ENCODE measurements at regions of chr6 and their contacts with region 1.

Region 1: DNA sequence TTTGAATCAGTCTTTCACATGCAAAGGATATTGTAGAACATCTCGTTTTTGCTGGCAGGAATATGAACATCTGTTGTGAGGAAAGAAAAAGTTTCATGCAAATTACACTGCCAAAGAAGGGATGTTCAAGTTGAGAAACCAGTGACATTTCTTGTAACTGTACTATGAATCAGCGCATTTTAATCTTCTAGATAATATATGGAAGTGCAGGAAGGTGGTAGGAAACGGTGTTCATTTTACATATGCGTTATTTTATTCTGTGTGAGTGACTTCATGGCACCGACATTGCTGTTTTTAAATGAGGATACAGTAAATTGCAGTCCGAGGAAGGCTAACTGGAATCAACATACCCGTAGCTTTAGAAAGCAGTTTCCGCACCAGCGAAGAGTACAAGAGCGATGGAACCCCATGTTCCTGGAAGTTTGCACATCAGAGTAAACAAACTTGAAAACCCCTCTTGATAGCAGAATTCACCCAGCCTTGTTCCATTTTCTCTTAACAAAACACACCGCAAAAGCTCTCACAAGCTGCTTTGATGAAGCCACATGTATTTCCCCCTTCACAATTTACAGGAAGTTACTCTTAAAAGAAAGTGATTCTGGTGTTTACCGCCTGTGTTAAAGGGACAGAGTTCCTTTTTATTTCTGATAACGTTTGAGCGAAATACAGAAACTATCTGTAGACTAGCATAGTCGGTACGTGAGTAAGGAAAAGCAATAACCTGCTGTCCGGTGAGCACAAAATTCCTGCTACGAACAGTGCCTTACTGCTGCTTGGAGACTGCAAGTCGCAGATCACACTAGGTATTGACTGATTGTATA is 11.5 kb downstream of the PRDM1 start:
- DNase-seq: peak; percentile 74
- H3K4me3 Mint-ChIP-seq: peak overlapping the region; percentile 77
- H3K27ac Mint-ChIP-seq: peak overlapping the region; percentile 98
- H3K4me1 Mint-ChIP-seq: peaks cover 84% of the 10 kb centered on the region
- H3K27me3 Mint-ChIP-seq: peaks cover 10% of the 10 kb centered on the region

Region 2: GRCh38 chr6:104789770-104790190 is 1307.8 kb before region 1 on chr6:
- CTCF ChIA-PET with region 1: no interaction called
- intact Hi-C with region 1: loop called (anchors 5 kb)
- DNase-seq: peak; percentile 49
- H3K4me3 Mint-ChIP-seq: peak overlapping the region; percentile 59
- H3K27ac Mint-ChIP-seq: peak overlapping the region; percentile 90
- H3K4me1 Mint-ChIP-seq: peaks cover 28% of the 10 kb centered on the region
- H3K27me3 Mint-ChIP-seq: no peaks in the 10 kb centered on the region

Region 3: DNA sequence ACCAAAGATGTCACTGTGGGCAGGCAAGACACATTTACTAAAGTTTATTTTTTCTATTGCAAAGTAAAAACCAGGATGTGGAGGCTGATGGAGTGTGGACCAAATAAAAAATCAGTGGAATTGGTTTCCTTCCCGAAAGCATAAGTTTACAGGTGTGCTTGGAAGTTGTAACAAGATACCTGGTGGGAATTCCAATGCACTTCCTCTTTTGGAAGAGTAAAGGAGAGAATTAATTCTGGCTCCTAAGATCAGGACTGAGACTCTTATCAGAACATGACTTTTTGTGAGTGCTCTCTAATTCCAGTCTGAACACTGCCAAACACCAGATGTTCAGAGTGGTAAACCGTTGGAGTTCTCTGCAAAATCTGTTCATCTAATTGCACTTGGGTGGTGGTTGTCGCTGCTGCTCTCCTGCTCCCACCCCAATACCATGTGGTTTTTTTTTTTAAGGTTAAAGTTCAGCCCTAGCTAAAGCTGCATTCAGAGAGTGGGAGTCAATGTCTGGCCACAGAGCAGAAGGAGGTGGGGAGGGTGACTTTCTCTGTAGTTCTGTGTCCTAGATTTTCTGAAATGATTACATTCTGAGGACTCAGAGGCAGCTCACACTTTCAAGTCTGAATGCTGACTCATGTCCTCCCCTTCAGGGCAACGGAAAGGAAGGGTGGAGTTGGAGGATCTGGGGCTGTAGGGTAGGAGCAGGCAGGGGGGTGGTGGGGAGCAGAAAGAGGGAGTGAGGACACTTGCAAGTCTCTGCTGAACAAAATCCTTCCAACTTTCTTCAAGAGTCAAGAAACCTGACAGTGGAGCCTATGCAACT is 287.3 kb before region 1 on chr6:
- CTCF ChIA-PET with region 1: no interaction called
- intact Hi-C with region 1: loop called (anchors 1 kb)
- DNase-seq: peak; percentile 74
- H3K4me3 Mint-ChIP-seq: no peak overlapping the region
- H3K27ac Mint-ChIP-seq: no peak overlapping the region
- H3K4me1 Mint-ChIP-seq: peaks cover 33% of the 10 kb centered on the region
- H3K27me3 Mint-ChIP-seq: no peaks in the 10 kb centered on the region

Region 4: GRCh38 chr6:105981002-105981887 is 116.4 kb before region 1 on chr6:
- CTCF ChIA-PET with region 1: no interaction called
- intact Hi-C with region 1: loop called (anchors 1 kb)
- DNase-seq: peak; percentile 58
- H3K4me3 Mint-ChIP-seq: peak overlapping the region; percentile 62
- H3K27ac Mint-ChIP-seq: peak overlapping the region; percentile 79
- H3K4me1 Mint-ChIP-seq: peaks cover 26% of the 10 kb centered on the region
- H3K27me3 Mint-ChIP-seq: peaks cover 52% of the 10 kb centered on the region

Region 5: DNA sequence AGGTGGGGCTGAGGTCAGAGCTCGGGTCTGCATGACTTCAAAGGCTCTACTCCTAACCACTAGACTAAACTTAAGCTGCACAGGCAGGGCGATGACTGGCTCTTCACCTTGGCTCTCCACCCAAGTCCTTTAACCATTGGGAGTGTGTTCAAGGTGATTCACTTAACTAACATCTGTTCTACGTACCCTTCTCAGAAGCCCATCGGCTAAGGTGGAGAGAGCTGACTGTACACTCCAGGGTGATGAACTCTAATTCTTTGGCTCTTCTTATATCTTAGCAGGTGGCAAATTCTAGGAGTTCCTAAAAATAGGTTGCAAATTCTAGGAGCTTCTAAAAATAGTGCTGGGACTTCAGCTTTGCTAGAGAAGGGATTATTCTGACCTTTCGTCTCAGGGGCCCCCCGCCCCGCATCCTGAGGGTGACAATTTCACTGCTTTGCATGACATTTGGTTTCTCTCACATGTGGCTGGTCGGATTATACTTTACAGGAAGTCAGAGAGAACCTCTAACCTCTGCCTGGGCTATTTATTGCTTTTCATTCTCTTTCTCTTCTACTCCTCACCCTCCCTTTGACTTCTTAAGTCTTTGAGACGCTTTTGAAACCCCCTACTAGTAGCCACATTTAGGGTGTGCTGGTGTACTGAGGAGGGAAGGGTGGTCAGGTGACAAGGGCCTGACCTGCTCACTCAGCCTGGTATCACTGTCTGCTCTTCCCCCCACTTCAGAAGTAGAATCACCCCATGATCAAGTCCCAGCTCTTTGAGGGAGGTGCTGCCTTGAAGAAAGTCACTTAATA is 44.0 kb after region 1 on chr6:
- CTCF ChIA-PET with region 1: interaction called, 4 read pairs
- intact Hi-C with region 1: loop called (anchors 1 kb)
- DNase-seq: peak; percentile 75
- H3K4me3 Mint-ChIP-seq: peak overlapping the region; percentile 13
- H3K27ac Mint-ChIP-seq: peak overlapping the region; percentile 83
- H3K4me1 Mint-ChIP-seq: peaks cover 31% of the 10 kb centered on the region
- H3K27me3 Mint-ChIP-seq: no peaks in the 10 kb centered on the region

Region 6: DNA sequence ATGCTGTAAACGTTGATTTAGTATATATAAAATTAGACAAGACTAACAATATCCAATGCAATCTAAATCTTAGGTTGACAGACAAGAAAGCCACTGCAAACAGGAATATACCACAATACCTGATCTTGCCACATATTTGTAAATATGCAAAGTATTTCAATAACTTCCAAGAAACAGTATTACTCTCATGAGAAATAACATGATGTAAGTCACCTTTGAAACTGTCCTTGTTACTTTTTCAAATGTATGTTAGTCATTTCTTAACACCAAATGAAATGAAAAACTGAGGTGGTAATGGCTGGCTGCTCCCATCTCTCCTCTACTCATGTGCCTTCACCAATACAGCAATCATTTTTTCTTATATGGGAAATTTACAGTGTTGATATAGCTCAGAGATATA is 109.3 kb after region 1 on chr6:
- CTCF ChIA-PET with region 1: no interaction called
- intact Hi-C with region 1: loop called (anchors 1 kb)
- DNase-seq: no peak
- H3K4me3 Mint-ChIP-seq: no peak overlapping the region
- H3K27ac Mint-ChIP-seq: no peak overlapping the region
- H3K4me1 Mint-ChIP-seq: peaks cover 18% of the 10 kb centered on the region
- H3K27me3 Mint-ChIP-seq: no peaks in the 10 kb centered on the region

Region 7: GRCh38 chr6:106519460-106520394 is 422.1 kb after region 1 on chr6:
- CTCF ChIA-PET with region 1: no interaction called
- intact Hi-C with region 1: loop called (anchors 1 kb)
- DNase-seq: peak; percentile 93
- H3K4me3 Mint-ChIP-seq: peak overlapping the region; percentile 77
- H3K27ac Mint-ChIP-seq: peak overlapping the region; percentile 99
- H3K4me1 Mint-ChIP-seq: peaks cover 71% of the 10 kb centered on the region
- H3K27me3 Mint-ChIP-seq: no peaks in the 10 kb centered on the region

Measured in activated naive CD4-positive, alpha-beta T cell treated with anti-CD3 and anti-CD28 coated beads for 36 hours (primary cell).